Transverse colon (tissue), 4 donors: ENCODE measurements at regions of chr15 and their contacts with region 1.

Region 1: DNA sequence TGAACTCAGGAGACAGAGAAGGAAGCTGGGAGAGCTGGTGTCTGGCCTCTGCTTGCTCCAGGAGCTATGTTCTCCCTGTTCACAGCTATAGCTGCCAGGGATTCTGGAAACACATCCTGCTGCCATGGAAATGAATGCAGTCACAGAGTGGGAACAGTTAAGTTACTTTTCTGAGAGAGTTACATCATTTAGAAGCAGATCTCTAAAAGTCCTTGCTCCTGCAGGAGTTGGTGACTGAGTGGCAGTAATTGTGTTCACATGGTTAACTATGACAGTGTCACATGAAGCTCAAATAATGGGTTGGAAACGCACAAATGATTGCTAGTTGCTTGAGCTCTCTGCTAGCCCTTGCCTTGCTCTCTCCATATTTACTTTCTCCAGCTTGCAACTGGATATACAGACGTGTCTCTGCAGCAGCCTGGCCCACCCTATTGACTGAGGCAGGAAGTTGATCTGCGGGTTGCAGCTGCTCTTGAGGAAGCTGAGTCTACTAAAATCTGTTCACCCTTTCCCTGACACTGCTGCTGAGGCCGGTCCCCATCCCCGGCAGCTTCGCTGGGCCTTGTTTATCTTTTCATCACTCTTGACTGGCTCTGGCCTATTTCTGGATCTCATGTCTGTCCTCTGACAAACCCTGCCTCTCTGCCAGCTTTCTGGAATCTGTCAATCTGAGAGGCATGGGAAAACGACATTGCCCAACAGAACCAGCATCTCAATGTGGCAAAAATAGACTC is 16.7 kb upstream of the ISLR start:
- DNase-seq: no peak
- H3K4me3 ChIP-seq: no peak overlapping the region
- H3K27ac ChIP-seq: peak overlapping the region in 3 of 4 donors; percentile 0 to 66 (median 30)
- H3K4me1 ChIP-seq: peaks cover 0 to 15% (median 6%) of the 10 kb centered on the region in 4 donors
- H3K27me3 ChIP-seq: no peaks in the 10 kb centered on the region
- CTCF ChIP-seq: no peak
- EP300 ChIP-seq: no peak
- POLR2A ChIP-seq: no peak

Region 2: DNA sequence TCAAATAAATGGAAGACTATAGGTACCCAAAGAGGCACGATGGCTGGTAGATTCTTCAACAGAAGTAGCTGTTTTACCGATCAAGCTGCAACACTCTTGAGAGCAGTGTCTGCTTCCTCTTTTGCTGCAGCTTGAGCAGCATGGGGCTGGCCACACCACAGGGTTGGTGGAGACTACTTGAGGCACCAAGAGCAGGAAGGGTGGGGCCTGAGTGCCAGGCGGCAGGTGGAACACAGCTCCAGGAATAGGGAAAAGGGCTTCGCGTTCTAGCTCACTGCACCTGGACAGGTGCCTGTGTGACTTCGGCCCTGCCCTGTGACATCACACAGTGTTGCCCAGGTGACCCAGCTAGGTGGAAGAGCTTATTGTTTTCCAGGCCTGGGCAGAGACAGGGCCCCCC is 79.1 kb after region 1 on chr15 and contains the start of gene CCDC33:
- in situ Hi-C with region 1: no loop called
- intact Hi-C with region 1: loop called (anchors 10 kb)
- DNase-seq: peak; percentile 87
- H3K4me3 ChIP-seq: no peak within 1 kb of the TSS
- H3K27ac ChIP-seq: peak within 1 kb of the TSS; percentile 21 to 65 (median 45)
- H3K4me1 ChIP-seq: peaks cover 0 to 22% (median 12%) of the 10 kb centered on the region in 4 donors
- H3K27me3 ChIP-seq: no peaks in the 10 kb centered on the region
- CTCF ChIP-seq: no peak
- EP300 ChIP-seq: no peak
- POLR2A ChIP-seq: no peak
- total RNA-seq, gene CCDC33: 0.16 TPM in 1 of 4 donors, not detected in the others